PC-9 (cell line): ENCODE measurements at regions of chr5 and their contacts with region 1.

Region 1: DNA sequence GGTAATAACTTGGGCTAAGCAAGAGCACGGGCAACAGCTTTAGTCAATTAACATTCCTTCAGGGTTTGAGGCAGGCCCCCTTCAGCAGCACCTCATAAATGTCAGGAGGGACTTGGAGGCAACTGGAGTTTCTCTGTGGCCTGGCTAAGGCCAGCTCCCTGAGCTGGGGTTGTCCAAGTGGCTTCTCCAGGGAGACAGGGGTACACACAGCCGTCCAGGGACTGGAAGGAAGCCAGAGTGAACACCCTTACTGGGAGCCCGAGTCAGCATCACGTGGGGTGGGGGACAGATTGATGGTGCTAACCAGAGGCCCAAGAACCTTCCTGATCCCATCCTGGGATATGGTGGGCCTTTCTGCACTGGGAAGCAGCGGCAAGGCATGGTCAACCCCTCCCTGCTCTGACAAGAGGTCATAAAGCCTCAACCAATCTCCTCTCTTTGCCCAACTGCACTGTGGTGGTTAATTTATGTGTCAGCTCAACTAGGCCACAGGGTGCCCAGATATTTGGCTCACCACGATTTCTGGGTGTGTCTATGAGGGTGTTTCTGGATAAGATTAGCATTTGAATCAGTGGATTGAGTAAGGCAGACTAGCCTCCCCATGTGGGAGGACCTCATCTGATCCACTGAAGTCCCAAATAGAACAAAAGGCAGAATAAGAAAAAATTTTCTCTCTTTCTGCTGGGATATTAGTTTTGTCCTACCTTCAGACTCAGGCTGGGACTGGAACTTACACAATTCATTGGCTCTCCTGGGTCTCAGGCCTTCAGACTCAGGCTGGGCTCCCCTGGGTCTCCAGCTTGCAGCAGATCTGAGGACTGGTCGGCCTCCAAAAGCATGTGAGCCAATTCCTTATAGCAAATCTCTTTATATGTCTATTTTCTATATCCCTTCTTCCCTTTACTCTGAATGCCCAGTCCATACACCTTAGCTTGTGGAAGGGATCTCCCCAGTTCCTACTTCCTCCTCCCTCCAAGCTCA is 127.2 kb upstream of the LARP1 start:
- DNase-seq: no peak
- H3K4me3 ChIP-seq: no peak overlapping the region
- H3K27ac ChIP-seq: no peak overlapping the region
- H3K4me1 ChIP-seq: no peaks in the 10 kb centered on the region
- H3K27me3 ChIP-seq: no peaks in the 10 kb centered on the region
- CTCF ChIP-seq: no peak

Region 2: GRCh38 chr5:154818471-154819116 is 190.6 kb after region 1 on chr5:
- CTCF ChIA-PET with region 1: interaction called, 13 read pairs
- POLR2A ChIA-PET with region 1: no interaction called
- intact Hi-C with region 1: no loop called
- DNase-seq: no peak
- H3K4me3 ChIP-seq: no peak overlapping the region
- H3K27ac ChIP-seq: no peak overlapping the region
- H3K4me1 ChIP-seq: no peaks in the 10 kb centered on the region
- H3K27me3 ChIP-seq: no peaks in the 10 kb centered on the region
- CTCF ChIP-seq: no peak

Region 3: DNA sequence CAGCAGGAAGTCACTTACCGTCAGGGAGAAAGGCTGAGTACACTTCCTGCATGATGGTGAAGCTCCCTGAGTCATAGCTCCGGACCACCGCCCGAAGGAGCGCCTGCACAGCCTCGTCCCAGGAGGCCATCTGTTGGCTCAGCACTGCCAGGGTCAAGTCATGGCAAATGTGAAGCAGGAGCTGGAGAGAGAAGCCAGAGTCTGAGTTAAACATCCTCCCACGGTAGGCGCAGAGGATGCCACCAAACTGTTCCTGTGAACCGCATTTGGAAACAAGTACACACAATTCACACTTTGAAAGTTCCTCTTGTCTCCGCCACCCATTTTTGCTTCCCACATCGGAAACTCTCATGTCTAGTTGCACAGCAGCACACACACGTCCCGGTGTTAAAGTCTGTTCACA is 264.4 kb after region 1 on chr5:
- CTCF ChIA-PET with region 1: interaction called, 10 read pairs
- POLR2A ChIA-PET with region 1: no interaction called
- intact Hi-C with region 1: no loop called
- DNase-seq: no peak
- H3K4me3 ChIP-seq: no peak overlapping the region
- H3K27ac ChIP-seq: no peak overlapping the region
- H3K4me1 ChIP-seq: no peaks in the 10 kb centered on the region
- H3K27me3 ChIP-seq: no peaks in the 10 kb centered on the region
- CTCF ChIP-seq: no peak

Region 4: DNA sequence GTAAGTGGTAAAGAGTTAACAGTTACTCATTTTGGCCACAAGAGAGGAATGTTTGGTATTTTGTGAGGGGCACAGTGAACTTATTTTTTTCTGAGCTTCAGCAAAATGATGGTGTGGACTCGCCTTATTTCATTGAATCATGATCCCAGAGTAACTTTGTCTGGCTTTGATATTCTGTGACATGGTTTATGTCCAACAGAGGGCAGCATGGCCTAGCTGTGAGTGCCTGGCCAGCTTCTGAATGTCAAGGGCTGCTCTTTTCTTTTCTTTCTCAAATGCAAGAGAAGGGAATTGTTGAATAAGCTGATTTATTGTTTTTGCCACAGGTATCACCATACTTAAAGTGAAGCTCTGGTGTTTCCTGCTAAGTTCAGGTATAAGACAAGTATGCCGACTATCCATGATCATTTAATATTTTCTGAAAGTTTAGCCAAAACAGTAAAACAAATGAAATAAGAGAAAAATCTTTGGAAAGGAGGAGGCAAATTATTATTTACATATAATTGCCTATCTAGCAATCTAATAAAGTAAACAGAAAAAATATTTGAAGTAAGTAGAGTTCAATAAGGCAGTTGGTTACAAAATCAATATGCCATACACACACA is 344.6 kb after region 1 on chr5:
- CTCF ChIA-PET with region 1: no interaction called
- POLR2A ChIA-PET with region 1: no interaction called
- intact Hi-C with region 1: no loop called
- DNase-seq: peak in 1 of 2 experiments; percentile 24
- H3K4me3 ChIP-seq: no peak overlapping the region
- H3K27ac ChIP-seq: no peak overlapping the region
- H3K4me1 ChIP-seq: peaks cover 6% of the 10 kb centered on the region; the same call in 1 of the 2 replicates
- H3K27me3 ChIP-seq: no peaks in the 10 kb centered on the region
- CTCF ChIP-seq: peak; percentile 78